ENCODE measurements at regions of chr3 and their contacts with region 1.

Region 1: DNA sequence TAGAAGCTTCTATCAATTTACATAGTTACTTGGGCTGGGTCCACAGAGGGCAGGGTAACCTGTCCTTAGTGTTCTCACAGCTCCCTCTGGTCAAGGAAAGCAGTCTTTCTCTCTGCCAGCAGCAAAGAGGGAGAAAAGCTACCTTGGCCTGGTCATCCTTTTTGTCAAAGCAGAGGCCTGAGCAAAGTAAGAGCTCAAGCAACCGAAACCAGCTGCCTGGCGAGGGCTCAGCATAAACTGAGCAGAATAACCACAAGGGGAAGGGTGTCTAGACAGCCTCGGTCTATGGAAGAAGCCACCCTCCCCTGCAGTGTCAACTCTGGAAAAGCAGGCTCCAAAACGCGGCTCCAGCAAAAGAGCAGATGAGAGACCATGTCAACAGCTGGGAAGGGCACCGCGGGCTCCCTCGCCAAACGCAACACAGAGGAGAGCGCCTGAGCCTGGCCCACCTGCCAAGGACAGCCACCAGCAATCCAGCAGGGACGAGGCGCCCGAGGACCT is 17.4 kb downstream of the LRIG1 start:
- DNase-seq: peak in 1 of 9 donors; percentile 13
- ATAC-seq: peak; percentile 55
- H3K4me3 ChIP-seq: no peak overlapping the region
- H3K4me3 Mint-ChIP-seq: peak overlapping the region in 8 of 10 donors; percentile 1 to 68 (median 50)
- H3K27ac ChIP-seq: no peak overlapping the region
- H3K27ac Mint-ChIP-seq: peak overlapping the region in 7 of 9 donors; percentile 7 to 70 (median 55)
- H3K4me1 ChIP-seq: peaks cover 42 to 47% of the 10 kb centered on the region in 2 donors
- H3K4me1 Mint-ChIP-seq: peaks cover 53 to 86% (median 77%) of the 10 kb centered on the region in 7 donors
- H3K27me3 ChIP-seq: no peaks in the 10 kb centered on the region
- H3K27me3 Mint-ChIP-seq: no peaks in the 10 kb centered on the region

Region 2: GRCh38 chr3:66179793-66180192 is 303.7 kb before region 1 on chr3:
- CTCF ChIA-PET with region 1: no interaction called
- POLR2A ChIA-PET with region 1: no interaction called
- intact Hi-C with region 1: no loop called
- DNase-seq: no peak
- ATAC-seq: no peak
- H3K4me3 ChIP-seq: no peak overlapping the region
- H3K4me3 Mint-ChIP-seq: no peak overlapping the region
- H3K27ac ChIP-seq: no peak overlapping the region
- H3K27ac Mint-ChIP-seq: no peak overlapping the region
- H3K4me1 ChIP-seq: no peaks in the 10 kb centered on the region
- H3K4me1 Mint-ChIP-seq: no peaks in the 10 kb centered on the region
- H3K27me3 ChIP-seq: no peaks in the 10 kb centered on the region
- H3K27me3 Mint-ChIP-seq: no peaks in the 10 kb centered on the region

Region 3: DNA sequence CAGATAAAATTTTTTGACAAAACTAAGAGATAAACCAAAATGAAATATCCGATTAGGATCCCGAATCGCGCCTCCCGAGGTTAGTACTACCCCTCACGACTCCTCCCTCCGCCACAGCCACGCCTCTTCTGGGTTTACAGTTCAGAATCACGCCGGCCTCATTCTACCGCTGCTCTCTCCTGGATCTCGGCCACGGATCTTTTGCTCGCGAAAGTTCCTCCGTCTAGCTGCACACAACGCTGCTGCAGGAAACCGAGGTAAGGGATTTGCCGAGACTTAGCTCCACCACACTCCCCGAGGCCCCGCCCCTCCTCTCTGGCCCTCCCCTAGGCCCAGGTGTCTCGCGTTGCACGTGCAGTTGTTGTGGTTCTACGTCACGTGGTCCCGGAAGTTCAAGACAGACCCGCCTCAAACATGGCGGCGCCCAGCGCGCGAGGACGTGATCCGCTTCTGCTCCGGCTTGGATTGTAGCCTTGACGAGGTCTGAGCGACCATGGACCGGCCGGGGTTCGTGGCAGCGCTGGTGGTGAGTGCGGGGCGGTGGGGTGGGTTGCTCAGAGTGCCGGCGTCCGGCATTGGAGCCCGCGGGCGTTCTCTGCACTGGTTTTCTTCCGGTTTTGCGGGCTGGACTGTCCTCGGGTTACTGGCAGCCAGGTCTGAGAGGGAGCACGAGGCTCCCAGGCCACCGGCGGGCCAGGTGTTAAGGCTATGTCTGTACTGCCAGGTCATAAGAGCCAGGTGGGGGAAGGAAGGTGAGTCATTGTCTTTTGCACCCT is 262.7 kb before region 1 on chr3 and contains the start of gene SLC25A26:
- CTCF ChIA-PET with region 1: no interaction called
- POLR2A ChIA-PET with region 1: no interaction called
- intact Hi-C with region 1: loop called in 1 of 2 experiments (anchors 5 kb)
- DNase-seq: peak; percentile 90 to 99 (median 97)
- ATAC-seq: peak; percentile 99
- H3K4me3 ChIP-seq: peak within 1 kb of the TSS; percentile 70
- H3K4me3 Mint-ChIP-seq: peak within 1 kb of the TSS; percentile 91 to 99 (median 96)
- H3K27ac ChIP-seq: peak within 1 kb of the TSS; percentile 90
- H3K27ac Mint-ChIP-seq: peak within 1 kb of the TSS; percentile 85 to 98 (median 95)
- H3K4me1 ChIP-seq: peaks cover 7% of the 10 kb centered on the region in 2 donors
- H3K4me1 Mint-ChIP-seq: peaks cover 15 to 55% (median 44%) of the 10 kb centered on the region in 7 donors
- H3K27me3 ChIP-seq: no peaks in the 10 kb centered on the region
- H3K27me3 Mint-ChIP-seq: peaks cover 0 to 2% (median 0%) of the 10 kb centered on the region in 5 donors
- total RNA-seq, gene SLC25A26: 14.1 to 25.5 (median 17.9) TPM

Region 4: DNA sequence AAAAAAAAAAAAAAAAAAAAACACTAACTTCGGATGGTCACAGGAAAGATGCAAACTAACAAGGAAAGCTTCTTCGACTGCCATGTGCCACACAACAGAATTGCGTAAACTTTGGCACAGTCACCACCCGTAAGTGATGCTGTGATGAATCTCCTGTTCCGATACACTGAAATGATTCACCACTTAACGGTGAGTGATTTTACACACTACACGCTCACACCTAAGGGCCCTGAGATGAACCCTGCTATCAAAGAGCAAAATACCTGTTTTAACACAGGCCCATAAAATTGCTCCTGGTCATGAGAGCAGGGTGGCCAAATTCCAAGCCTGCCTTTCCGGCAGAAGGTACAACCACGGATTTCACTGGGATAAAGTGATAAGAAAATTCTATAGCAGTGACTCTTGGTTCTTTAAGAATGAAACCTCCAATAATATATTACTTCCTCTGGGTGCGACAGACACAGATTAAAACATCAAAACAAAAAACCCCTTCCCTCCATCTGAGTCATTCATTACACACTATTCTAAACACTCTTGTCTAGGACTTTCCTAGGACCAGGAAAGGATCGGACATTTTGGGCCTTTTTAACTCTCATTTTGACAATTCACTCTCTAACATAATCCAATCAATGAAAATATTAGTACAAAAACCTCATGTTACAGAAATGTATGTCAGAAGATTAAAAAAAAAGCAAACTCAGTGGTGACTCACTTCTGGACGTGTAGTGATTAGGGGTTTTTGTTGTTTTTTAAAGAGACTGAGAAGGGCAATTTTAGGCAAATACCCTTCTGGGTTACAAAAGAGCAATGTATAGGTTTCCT is 10.9 kb before region 1 on chr3:
- CTCF ChIA-PET with region 1: interaction called, 3 read pairs
- POLR2A ChIA-PET with region 1: interaction called, 3 read pairs
- intact Hi-C with region 1: loop called in 1 of 2 experiments (anchors 1 kb)
- DNase-seq: peak in 1 of 9 donors; percentile 52
- ATAC-seq: peak; percentile 74
- H3K4me3 ChIP-seq: peak overlapping the region; percentile 19
- H3K4me3 Mint-ChIP-seq: peak overlapping the region in 8 of 10 donors; percentile 0 to 70 (median 26)
- H3K27ac ChIP-seq: no peak overlapping the region
- H3K27ac Mint-ChIP-seq: peak overlapping the region in 2 of 9 donors; percentile 29 to 88
- H3K4me1 ChIP-seq: peaks cover 8 to 23% of the 10 kb centered on the region in 2 donors
- H3K4me1 Mint-ChIP-seq: peaks cover 13 to 44% (median 30%) of the 10 kb centered on the region in 7 donors
- H3K27me3 ChIP-seq: no peaks in the 10 kb centered on the region
- H3K27me3 Mint-ChIP-seq: no peaks in the 10 kb centered on the region